MCF 10A (cell line): ENCODE measurements at regions of chr13 and their contacts with region 1.

Region 1: DNA sequence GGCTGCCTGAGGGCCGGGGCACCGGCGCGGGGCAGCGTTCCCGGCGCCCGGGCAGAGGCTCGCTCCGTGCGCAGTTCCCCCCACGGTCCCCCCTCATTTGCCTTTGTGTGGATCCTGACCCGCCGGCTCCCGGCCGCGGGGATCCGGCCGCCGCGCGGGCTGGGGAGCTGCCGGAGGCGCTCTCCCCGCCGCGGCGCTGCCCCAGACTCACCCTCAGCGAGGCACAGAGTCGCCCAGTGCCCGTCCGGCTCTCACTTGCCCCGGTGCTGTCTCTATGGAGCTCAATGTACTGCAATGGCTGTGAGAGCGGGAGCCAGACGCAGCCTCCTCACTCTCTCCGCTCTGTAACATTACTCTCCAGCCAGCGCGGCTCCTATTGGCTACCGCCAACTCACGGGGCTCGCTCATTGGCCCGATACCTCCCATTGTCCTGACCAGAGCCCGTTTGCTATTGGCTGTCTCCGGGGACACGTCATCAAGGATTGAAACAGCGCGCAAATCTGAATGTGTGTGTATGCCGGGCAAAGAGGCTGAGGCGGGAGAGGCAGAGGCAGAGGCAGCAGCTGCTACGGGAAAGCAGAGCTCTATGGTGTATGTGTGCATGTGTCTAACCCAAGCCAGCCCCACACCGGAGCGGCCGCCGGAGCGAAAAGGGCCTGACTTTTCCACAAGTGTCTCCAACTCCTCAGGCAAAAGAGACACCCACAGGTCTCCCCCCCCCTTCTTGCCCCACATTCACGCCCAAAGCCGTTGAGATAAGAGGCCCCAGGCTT is at the start of gene HMGB1:
- DNase-seq: peak; percentile 99
- H3K4me3 Mint-ChIP-seq: peak within 1 kb of the TSS; percentile 89
- H3K27ac Mint-ChIP-seq: peak within 1 kb of the TSS; percentile 97
- H3K4me1 Mint-ChIP-seq: peaks cover 11% of the 10 kb centered on the region
- H3K27me3 Mint-ChIP-seq: no peaks in the 10 kb centered on the region
- CTCF ChIP-seq: no peak
- total RNA-seq, gene HMGB1: 302 and 307 TPM in 2 replicates

Region 2: DNA sequence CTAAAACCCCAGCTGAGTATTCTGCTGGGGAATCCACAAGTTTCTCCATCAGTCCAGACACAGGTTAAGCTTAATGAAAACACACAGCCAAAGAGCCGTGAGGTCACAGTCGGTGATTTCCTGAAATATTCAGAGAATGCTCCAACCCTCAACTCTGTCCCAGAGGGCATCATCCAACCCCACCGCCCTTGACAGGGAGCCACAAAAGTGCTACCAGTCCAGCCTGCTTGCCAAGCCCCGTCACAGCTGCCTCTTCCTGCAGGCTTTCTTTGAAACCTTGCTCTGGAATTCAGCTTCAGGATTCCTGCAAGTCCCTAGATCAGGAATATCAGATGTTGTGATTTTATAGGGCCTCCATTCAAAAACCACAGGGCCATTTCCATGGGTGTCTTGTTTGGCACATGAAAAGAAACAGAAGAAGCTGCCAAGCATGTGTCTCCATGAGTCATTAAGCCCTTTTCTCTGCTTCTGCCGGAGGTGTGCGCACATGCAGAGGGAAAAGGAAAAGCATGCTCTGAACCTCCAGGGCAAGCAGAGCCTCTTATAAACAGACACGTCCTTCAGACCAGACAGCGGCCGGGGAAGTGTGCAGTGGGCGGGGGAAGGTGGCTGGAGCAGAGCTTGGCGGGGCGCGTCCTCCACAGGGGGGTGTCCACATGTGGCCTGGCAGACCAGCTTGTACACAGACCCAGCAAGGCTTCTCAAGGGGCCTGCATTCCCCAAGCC is 323.1 kb before region 1 on chr13:
- CTCF ChIA-PET with region 1: interaction called, 4 read pairs
- POLR2A ChIA-PET with region 1: interaction called, 18 read pairs
- intact Hi-C with region 1: no loop called
- DNase-seq: peak; percentile 94
- H3K4me3 Mint-ChIP-seq: peak overlapping the region; percentile 61
- H3K27ac Mint-ChIP-seq: peak overlapping the region; percentile 98
- H3K4me1 Mint-ChIP-seq: peaks cover 36% of the 10 kb centered on the region
- H3K27me3 Mint-ChIP-seq: no peaks in the 10 kb centered on the region
- CTCF ChIP-seq: no peak

Region 3: GRCh38 chr13:30408319-30409101 is 57.3 kb before region 1 on chr13:
- CTCF ChIA-PET with region 1: interaction called, 5 read pairs
- POLR2A ChIA-PET with region 1: interaction called, 10 read pairs
- intact Hi-C with region 1: no loop called
- DNase-seq: peak; percentile 93
- H3K4me3 Mint-ChIP-seq: peak overlapping the region; percentile 55
- H3K27ac Mint-ChIP-seq: peak overlapping the region; percentile 84
- H3K4me1 Mint-ChIP-seq: peaks cover 12% of the 10 kb centered on the region
- H3K27me3 Mint-ChIP-seq: no peaks in the 10 kb centered on the region
- CTCF ChIP-seq: peak; percentile 59

Region 4: GRCh38 chr13:30572859-30573275 is 107.1 kb after region 1 on chr13:
- CTCF ChIA-PET with region 1: interaction called, 4 read pairs
- POLR2A ChIA-PET with region 1: interaction called, 5 read pairs
- intact Hi-C with region 1: loop called (anchors 5 kb)
- DNase-seq: peak; percentile 54
- H3K4me3 Mint-ChIP-seq: peak overlapping the region; percentile 68
- H3K27ac Mint-ChIP-seq: peak overlapping the region; percentile 89
- H3K4me1 Mint-ChIP-seq: peaks cover 38% of the 10 kb centered on the region
- H3K27me3 Mint-ChIP-seq: no peaks in the 10 kb centered on the region
- CTCF ChIP-seq: peak; percentile 24

Region 5: GRCh38 chr13:30865123-30866049 is 399.6 kb after region 1 on chr13:
- CTCF ChIA-PET with region 1: no interaction called
- POLR2A ChIA-PET with region 1: interaction called, 4 read pairs
- intact Hi-C with region 1: loop called (anchors 10 kb)
- DNase-seq: peak; percentile 89
- H3K4me3 Mint-ChIP-seq: peak overlapping the region; percentile 38
- H3K27ac Mint-ChIP-seq: peak overlapping the region; percentile 85
- H3K4me1 Mint-ChIP-seq: peaks cover 38% of the 10 kb centered on the region
- H3K27me3 Mint-ChIP-seq: no peaks in the 10 kb centered on the region
- CTCF ChIP-seq: peak; percentile 93